ENCODE measurements at regions of chr2 and their contacts with region 1.

Region 1: GRCh38 chr2:20411361-20411894 is 35.4 kb upstream of the RHOB start:
- DNase-seq: peak; percentile 89
- ATAC-seq: peak; percentile 100
- H3K4me3 Mint-ChIP-seq: no peak overlapping the region
- H3K27ac Mint-ChIP-seq: no peak overlapping the region
- H3K4me1 Mint-ChIP-seq: no peaks in the 10 kb centered on the region
- H3K27me3 Mint-ChIP-seq: peaks cover 6% of the 10 kb centered on the region
- CTCF ChIP-seq: peak; percentile 78

Region 2: DNA sequence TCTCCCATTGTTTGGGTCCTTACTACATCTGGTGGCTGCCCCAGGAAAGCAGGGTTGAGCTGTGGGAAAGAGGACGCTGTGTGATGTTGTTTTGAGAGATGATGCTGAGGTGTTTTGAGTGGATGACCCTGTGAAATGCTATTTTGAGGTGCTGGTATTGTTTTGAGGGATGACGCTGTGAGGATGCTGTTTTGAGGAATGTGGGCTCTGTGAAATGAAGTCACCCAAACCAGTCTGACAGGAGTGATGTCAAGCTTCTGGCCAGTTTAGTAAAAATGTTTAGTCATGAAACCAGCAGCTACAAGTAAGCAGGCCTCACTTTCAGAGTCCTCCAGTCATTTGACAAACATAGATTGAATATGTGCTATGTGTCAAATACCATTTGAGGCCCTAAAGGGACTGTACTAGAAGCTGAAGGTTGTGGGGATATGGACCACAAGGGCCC is 44.7 kb before region 1 on chr2:
- CTCF ChIA-PET with region 1: no interaction called
- POLR2A ChIA-PET with region 1: no interaction called
- DNase-seq: no peak
- ATAC-seq: no peak
- H3K4me3 Mint-ChIP-seq: no peak overlapping the region
- H3K27ac Mint-ChIP-seq: no peak overlapping the region
- H3K4me1 Mint-ChIP-seq: 0 out of 2 replicates have a peak, but pooled peaks cover 6% of the 10 kb centered on the region
- H3K27me3 Mint-ChIP-seq: peaks cover 3% of the 10 kb centered on the region; the same call in 1 of the 2 replicates
- CTCF ChIP-seq: no peak

Region 3: DNA sequence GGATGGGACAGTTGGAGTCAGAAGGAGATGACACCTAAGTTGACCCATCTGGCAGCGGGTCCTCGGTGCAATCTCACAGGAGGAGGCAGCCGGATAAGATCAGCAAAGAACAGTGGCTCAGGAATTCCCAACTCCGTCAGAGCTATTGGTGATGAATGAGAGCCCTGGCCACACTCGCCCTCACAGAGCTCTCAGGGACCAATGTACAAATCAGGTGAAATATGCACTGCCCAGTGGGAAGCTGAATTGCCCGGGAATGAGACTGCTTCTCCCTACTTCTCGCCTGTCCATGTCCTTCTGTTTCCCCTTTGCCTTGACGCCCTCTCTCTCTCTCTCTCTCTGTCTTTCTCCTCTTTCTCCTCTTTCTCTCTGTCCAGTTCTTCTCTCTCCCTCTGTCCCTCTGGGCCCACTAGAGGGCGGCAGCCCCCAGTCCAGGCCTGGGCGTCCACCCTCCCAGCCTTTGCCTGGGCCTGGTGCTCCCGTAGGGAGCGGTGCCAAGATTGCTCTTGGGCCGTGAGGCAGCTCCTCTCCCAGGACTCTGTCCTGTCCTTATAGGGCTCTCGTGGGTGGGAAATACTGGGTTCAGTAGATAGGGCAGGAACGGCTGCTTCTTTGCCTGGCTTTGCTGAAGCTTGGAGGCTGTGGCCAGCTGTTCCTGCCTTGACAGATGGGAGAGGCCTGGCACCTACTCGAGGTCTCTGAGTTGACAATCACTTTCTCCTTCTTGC is 32.5 kb before region 1 on chr2:
- CTCF ChIA-PET with region 1: interaction called, 29 read pairs
- POLR2A ChIA-PET with region 1: no interaction called
- DNase-seq: peak; percentile 81
- ATAC-seq: peak; percentile 97
- H3K4me3 Mint-ChIP-seq: no peak overlapping the region
- H3K27ac Mint-ChIP-seq: no peak overlapping the region
- H3K4me1 Mint-ChIP-seq: peaks cover 27% of the 10 kb centered on the region
- H3K27me3 Mint-ChIP-seq: peaks cover 4% of the 10 kb centered on the region; the same call in 1 of the 2 replicates
- CTCF ChIP-seq: peak; percentile 64

Region 4: DNA sequence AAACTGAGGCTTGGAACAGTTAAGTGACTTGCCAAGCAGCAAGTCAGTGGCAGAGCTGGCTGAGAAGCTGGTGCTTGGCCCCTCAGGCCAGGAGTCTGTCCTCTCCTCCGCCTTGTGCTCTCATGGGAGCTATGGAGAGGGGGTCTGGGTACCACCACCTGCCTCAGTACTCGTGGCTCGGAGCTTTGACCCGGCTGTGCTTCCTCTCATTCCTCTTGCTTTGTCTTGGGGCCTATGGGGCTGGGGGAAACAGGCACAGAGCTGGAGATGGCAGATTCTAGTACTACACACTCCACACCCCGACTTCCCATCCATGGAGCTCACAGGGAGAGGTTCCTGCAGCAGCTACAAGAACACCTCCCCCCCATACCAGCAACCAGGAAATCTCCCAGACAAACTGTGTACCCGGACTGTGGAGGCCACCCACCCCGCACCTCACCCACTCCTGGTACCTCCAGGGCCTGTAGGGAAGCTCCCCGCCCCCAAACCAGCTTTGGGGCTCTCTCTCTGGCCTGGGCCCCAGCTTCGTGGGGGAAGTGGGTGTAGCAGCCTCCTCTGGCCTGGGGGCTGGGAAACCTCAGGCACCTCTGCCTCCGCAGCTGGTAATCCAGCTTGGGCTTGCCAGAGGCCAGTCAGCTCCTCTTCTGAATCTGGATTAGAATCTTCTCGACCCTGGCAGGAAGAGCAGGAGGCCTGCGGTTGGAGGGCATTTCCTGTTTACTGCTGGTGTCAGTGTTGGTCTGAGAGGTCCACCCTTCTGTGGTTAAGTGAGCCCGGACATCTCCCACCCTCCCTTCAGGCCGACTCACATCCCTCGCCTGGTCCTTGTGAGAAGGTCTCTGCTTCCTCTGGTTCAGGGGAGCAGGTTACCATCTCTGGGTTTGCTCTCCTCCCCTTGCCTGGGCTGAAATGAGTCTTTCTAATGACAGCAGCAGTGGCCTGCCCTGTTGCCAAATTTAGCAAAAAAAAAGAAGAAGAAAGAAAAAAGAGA is 13.2 kb after region 1 on chr2:
- CTCF ChIA-PET with region 1: interaction called, 99 read pairs
- POLR2A ChIA-PET with region 1: no interaction called
- DNase-seq: no peak
- ATAC-seq: no peak
- H3K4me3 Mint-ChIP-seq: no peak overlapping the region
- H3K27ac Mint-ChIP-seq: no peak overlapping the region
- H3K4me1 Mint-ChIP-seq: peaks cover 9% of the 10 kb centered on the region
- H3K27me3 Mint-ChIP-seq: no peaks in the 10 kb centered on the region
- CTCF ChIP-seq: no peak

Region 5: DNA sequence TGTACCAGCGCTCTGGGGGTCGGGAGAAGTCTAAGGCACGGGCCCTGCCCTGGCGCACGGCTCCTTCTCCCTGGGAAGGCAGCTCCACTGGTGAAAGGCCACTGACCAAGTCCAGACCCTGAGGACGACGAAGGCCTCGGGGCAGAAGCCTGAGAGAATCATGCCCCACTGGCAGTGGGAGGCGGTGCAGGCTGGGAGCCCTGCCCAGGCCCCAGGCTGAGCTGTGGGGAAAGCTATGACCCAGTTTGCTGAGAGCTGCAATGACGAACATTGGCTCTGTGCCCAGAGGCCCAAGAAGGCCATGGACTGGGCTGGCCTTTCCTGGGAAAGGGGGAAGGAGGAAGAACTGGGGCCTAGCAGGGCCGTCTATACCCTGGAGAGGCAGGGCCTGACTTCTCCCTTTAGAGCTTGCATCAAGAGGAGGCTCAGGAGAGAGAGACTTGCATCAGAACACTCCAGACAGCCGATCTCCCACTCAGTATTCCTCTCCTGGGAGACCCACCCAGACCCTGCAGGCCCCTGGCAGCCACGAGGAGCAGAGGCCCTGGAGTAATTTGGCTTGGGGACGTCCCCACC is 206.6 kb after region 1 on chr2:
- CTCF ChIA-PET with region 1: interaction called, 10 read pairs
- POLR2A ChIA-PET with region 1: no interaction called
- DNase-seq: no peak
- ATAC-seq: peak; percentile 11; the same call in 1 of the 2 replicates
- H3K4me3 Mint-ChIP-seq: no peak overlapping the region
- H3K27ac Mint-ChIP-seq: peak overlapping the region; percentile 72; the same call in 1 of the 2 replicates
- H3K4me1 Mint-ChIP-seq: peaks cover 31% of the 10 kb centered on the region
- H3K27me3 Mint-ChIP-seq: no peaks in the 10 kb centered on the region
- CTCF ChIP-seq: no peak

Measured in WTC11 (cell line).